ENCODE measurements at regions of chr13 and their contacts with region 1.

Region 1: DNA sequence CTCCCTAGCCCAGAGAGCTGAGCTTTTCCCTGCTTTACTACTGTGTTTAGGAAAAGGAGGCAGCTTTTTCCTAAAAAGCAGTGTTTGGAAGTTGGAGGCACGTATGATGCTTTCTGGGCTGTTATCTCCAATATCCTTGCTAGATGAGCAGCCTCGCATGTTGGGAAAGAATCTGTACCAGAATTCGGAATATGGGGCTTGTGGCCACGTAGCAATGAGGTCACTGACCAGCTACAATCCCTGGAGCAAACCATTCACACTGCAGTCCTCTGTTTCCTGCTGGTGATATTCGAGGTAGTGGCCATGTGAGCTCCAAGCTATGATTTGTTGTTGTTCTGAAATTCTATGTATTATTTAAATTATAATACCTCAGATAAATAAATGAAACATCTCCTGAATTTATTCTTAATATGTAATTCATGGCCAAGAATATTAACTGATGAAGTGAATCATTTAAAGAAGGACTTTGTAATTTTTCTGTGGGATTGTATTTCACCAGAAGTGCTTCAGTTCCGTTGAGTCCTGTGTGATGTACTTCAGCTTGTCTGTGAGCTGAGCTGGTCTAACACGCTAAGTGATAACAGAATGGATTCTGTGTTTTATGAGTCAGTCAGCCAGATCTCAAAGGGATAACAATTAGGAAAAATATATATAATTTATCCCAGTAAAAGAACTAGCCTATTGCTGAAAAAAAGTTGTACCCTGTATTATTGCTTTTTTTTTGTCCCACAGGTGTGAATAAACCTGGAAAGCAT is 319.5 kb downstream of the SHISA2 start:
- DNase-seq: no peak
- H3K4me3 Mint-ChIP-seq: no peak overlapping the region
- H3K27ac Mint-ChIP-seq: peak overlapping the region; percentile 44
- H3K4me1 Mint-ChIP-seq: peaks cover 30% of the 10 kb centered on the region
- H3K27me3 Mint-ChIP-seq: no peaks in the 10 kb centered on the region
- CTCF ChIP-seq: no peak

Region 2: DNA sequence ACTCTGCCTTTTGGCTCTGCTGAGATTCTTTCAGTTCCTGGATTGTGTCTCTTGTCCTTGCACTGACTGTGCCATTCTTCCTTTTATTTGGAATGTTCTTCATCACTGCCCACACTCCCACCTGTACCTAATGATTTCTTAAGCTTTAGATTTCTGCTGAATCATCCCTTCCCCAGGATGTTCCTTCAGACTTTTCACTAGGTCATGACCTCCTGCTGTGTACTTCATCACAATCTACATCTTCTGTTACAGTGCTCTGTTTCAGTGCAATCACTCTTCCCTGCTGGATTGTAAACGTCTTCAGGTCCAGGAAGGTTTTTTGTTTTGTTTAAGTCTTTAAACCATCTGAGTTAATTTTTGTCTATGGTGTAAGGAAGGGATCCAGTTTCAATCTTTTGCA is 79.5 kb before region 1 on chr13:
- CTCF ChIA-PET with region 1: no interaction called
- POLR2A ChIA-PET with region 1: interaction called, 6 read pairs
- intact Hi-C with region 1: loop called (anchors 5 kb)
- DNase-seq: peak; percentile 42
- H3K4me3 Mint-ChIP-seq: no peak overlapping the region
- H3K27ac Mint-ChIP-seq: peak overlapping the region; percentile 41
- H3K4me1 Mint-ChIP-seq: peaks cover 25% of the 10 kb centered on the region
- H3K27me3 Mint-ChIP-seq: no peaks in the 10 kb centered on the region
- CTCF ChIP-seq: no peak

Region 3: DNA sequence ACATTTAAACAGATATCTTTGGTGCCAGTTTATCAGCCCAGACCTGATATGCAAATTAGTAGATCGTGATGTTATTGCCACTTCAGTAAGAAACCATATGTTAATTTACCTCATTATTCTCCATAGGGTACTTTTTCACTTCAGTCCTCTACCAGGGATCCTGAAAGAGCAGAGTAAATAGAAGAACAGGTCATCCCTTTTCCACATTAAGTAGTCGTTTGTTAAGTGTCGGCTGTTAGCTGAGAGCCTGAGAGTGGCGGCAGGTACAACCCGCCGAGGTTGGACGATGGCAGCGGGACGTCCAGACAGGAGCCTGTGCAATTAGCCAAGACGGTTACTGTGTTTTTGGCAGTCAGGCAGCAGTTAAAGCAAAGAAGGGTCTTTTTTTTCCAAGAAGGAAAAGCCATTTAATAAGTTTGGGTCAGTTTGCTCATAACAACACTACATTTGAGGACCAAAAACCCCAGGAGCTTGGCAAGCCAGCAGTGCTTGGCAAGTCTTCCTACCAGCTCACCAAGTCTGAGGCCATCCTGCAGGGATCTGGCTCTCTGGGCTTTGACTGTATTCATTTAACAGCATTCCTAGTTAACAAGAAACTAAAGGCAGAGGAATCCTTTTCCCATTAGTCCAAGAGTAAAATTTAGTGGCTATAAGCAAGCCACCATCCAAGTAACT is 87.7 kb after region 1 on chr13:
- CTCF ChIA-PET with region 1: no interaction called
- POLR2A ChIA-PET with region 1: no interaction called
- intact Hi-C with region 1: no loop called
- DNase-seq: no peak
- H3K4me3 Mint-ChIP-seq: no peak overlapping the region
- H3K27ac Mint-ChIP-seq: no peak overlapping the region
- H3K4me1 Mint-ChIP-seq: no peaks in the 10 kb centered on the region
- H3K27me3 Mint-ChIP-seq: no peaks in the 10 kb centered on the region
- CTCF ChIP-seq: no peak